ENCODE measurements at regions of chr3 and their contacts with region 1.

Region 1: DNA sequence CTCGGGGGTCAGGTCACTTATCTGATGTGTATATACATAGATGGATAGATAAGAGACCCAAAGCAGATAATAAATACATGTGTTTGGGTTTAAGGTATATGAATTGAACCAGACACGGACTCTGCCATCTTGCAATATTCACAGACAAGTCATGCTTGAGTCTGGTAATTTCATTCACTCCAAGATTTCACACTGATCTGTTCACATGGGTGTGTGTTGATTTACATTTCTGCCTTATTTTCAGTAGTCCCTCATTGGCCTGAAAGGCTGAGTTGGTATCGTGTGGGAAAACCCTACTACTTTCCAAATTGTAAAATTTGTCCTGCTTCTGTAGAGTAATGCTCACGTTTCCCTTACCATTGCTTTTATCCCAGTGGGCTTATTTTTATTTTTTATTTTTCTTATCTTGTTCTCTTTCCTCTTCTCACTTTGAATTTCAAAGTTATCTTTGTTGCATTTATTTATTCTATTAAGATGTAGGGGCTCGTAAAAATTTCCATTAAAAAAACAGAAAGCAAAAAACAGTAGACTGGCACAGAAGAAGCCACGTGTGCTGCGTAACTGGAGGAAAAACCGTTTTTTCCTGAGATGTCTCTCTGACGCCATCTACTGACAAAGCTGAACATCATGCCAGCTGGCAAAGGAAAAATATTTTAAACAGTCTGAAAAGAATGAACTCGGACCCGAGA is 10.8 kb upstream of the MFSD1 start:
- DNase-seq: no peak
- ATAC-seq: peak; percentile 87
- H3K4me3 ChIP-seq: no peak overlapping the region
- H3K27ac ChIP-seq: no peak overlapping the region
- H3K4me1 ChIP-seq: no peaks in the 10 kb centered on the region
- H3K27me3 ChIP-seq: no peaks in the 10 kb centered on the region; a peak in 1 of 4 replicates
- CTCF ChIP-seq: peak; percentile 79 to 88 (median 79)
- EP300 ChIP-seq: no peak
- POLR2A ChIP-seq: no peak
- RAD21 ChIP-seq: peak; percentile 92

Region 2: DNA sequence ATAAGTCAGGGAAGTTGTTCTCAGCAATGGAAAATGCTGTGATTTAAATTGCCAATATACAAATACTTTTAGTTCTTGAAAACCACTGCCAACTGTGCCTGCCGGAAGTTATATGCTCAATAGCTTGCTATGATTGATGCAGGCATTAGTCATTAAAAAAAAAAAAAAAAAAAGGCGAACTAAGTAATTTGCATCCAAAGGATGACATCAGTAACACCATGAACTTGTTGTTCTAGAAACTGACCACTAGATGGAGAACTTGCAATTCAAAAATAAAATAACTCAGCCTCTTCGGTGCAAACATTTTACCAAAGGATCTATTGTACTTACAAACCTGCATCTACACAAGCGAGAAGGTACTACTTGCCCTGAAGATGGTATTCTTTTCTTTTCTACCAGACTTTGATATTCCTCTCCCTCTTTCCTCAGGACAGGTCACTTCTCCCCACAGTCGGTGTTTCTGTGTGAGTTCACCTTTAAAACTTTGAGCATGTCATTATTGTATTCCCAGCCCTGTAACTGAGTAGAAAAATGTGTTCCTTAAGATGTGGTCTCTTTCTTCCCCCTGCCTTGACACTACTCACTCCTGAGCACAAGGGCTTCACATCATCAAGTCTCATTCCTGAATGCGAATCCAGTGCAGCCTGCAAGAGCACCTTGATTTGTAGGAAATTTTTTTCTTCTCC is 1172.8 kb before region 1 on chr3:
- CTCF ChIA-PET with region 1: interaction called, 3 read pairs
- POLR2A ChIA-PET with region 1: no interaction called
- RAD21 ChIA-PET with region 1: no interaction called
- SMC1A ChIA-PET with region 1: no interaction called
- in situ Hi-C with region 1: loop called (anchors 25 kb)
- intact Hi-C with region 1: loop called (anchors 10 kb)
- DNase-seq: peak; percentile 12
- ATAC-seq: peak; percentile 90
- H3K4me3 ChIP-seq: no peak overlapping the region
- H3K27ac ChIP-seq: no peak overlapping the region
- H3K4me1 ChIP-seq: no peaks in the 10 kb centered on the region
- H3K27me3 ChIP-seq: no peaks in the 10 kb centered on the region
- CTCF ChIP-seq: peak; percentile 55 to 62 (median 56); a peak in 5 of 6 replicates
- EP300 ChIP-seq: no peak
- POLR2A ChIP-seq: no peak
- RAD21 ChIP-seq: peak; percentile 68

Region 3: GRCh38 chr3:158672293-158673176 is 118.5 kb before region 1 on chr3 and contains the start of gene LXN:
- CTCF ChIA-PET with region 1: interaction called, 5 read pairs
- POLR2A ChIA-PET with region 1: no interaction called
- RAD21 ChIA-PET with region 1: interaction called, 3 read pairs
- SMC1A ChIA-PET with region 1: no interaction called
- in situ Hi-C with region 1: no loop called
- intact Hi-C with region 1: loop called (anchors 5 kb)
- DNase-seq: peak; percentile 56
- ATAC-seq: peak; percentile 99
- H3K4me3 ChIP-seq: peak within 1 kb of the TSS; percentile 78
- H3K27ac ChIP-seq: peak within 1 kb of the TSS; percentile 75
- H3K4me1 ChIP-seq: peaks cover 4% of the 10 kb centered on the region; the same call in 1 of the 2 replicates
- H3K27me3 ChIP-seq: no peaks in the 10 kb centered on the region
- CTCF ChIP-seq: peak; percentile 56 to 83 (median 82)
- EP300 ChIP-seq: no peak
- POLR2A ChIP-seq: peak; percentile 88
- RAD21 ChIP-seq: peak; percentile 38; the same call in 1 of the 2 replicates
- polyA plus RNA-seq, gene LXN: 30.7 to 45.0 TPM

Region 4: GRCh38 chr3:158801696-158802408 is 10.8 kb after region 1 on chr3 and contains the start of gene MFSD1:
- CTCF ChIA-PET with region 1: interaction called, 33 read pairs
- POLR2A ChIA-PET with region 1: no interaction called
- RAD21 ChIA-PET with region 1: interaction called, 4 read pairs
- SMC1A ChIA-PET with region 1: interaction called, 9 read pairs
- in situ Hi-C with region 1: no loop called
- intact Hi-C with region 1: no loop called
- DNase-seq: peak; percentile 43
- ATAC-seq: peak; percentile 98
- H3K4me3 ChIP-seq: peak within 1 kb of the TSS; percentile 93
- H3K27ac ChIP-seq: peak within 1 kb of the TSS; percentile 61
- H3K4me1 ChIP-seq: peaks cover 3% of the 10 kb centered on the region
- H3K27me3 ChIP-seq: no peaks in the 10 kb centered on the region
- CTCF ChIP-seq: no peak
- EP300 ChIP-seq: no peak
- POLR2A ChIP-seq: peak; percentile 87
- RAD21 ChIP-seq: no peak
- polyA plus RNA-seq, gene MFSD1: 7.3 to 14.6 TPM